Calu3 (cell line): ENCODE measurements at regions of chr3 and their contacts with region 1.

Region 1: DNA sequence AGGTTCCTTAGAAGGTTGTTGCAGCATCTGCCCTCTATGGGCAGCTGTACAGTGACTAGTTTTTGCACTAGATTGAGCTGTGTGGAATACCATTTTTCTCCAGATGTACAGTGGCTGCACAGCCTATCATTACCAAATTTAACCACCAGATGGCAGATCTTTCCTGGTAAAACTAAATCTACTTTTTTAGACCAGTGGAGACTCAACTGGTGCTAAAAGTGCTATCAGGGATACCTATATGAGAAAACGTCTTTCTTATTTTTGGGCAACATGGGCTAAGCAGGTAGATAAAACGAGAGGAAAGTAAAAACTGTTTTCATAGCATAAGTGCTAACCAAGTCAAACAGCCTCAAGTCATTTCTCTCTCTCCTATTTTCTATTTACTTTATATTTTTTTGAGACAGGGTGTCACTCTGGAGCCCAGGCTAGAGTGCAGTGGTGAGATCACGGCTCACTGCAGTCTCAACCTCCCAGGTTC is 21.2 kb downstream of the IGSF10 start:
- DNase-seq: peak; percentile 66
- H3K4me3 Mint-ChIP-seq: no peak overlapping the region
- H3K27ac Mint-ChIP-seq: no peak overlapping the region
- H3K4me1 Mint-ChIP-seq: peaks cover 8% of the 10 kb centered on the region
- H3K27me3 Mint-ChIP-seq: no peaks in the 10 kb centered on the region
- CTCF ChIP-seq: peak; percentile 88

Region 2: DNA sequence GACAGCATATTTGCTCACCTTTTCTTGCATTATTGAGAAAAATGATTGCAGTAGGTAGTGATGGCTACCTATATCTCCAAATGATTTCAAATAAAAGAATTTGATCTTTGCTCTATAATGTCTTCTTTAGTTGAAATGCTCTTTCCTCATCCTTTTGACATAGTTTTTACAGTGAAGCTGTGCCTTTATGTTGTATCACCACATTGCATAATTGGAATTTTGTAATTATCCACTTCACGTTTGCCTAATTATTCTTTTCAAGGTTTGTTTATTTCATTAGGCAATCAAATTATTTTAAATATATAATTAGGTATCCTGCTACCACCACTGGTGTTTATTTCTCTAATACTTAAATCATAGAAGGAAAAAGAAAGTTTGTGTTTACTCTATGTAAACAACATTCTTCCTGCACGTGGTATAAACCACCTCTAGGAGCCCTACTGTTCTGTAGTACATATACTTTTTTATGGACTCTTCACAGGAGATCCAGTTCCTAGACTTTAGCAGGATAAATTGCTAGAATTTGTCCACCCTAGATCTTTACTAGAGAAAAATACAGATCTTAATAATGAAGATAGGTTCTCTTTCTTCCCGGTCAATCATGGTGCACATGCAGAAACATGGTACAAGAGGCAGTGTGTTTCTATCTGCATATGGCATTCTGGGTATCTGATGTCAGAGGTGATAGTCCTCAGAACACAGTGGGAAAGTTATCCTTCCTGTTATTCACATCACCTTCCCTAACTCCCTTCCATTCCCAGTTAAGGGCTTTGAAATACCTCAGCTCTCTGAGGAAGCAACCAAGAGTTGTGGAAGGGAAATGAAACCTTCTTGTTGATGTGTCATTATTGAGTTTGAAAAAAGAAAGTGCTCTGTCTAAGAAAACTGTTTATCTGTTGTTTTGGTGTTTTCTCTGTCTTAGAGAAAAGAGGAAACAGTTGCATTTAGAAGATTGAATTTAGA is 88.8 kb before region 1 on chr3:
- CTCF ChIA-PET with region 1: no interaction called
- intact Hi-C with region 1: no loop called
- DNase-seq: no peak
- H3K4me3 Mint-ChIP-seq: no peak overlapping the region
- H3K27ac Mint-ChIP-seq: no peak overlapping the region
- H3K4me1 Mint-ChIP-seq: peaks cover 4% of the 10 kb centered on the region
- H3K27me3 Mint-ChIP-seq: no peaks in the 10 kb centered on the region
- CTCF ChIP-seq: no peak

Region 3: DNA sequence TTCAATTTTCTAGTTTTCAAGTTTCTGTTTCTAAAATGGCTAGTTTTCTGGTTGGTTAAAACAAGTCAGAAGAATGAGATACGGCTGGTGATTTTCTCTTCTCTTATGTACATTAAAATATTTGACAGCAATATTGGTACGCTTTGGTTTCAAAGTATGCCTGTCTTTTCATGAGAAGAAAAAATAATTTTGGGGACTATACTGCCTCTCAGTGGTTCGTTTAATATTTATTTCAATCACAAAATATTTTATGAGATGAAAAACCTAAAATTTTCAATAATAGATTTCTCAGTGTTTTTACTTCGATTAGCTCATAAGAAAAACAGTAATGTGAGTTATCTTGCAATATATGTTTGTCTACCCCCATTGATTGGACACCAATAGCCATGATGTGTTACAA is 221.2 kb after region 1 on chr3:
- CTCF ChIA-PET with region 1: no interaction called
- intact Hi-C with region 1: loop called (anchors 1 kb)
- DNase-seq: no peak
- H3K4me3 Mint-ChIP-seq: no peak overlapping the region
- H3K27ac Mint-ChIP-seq: no peak overlapping the region
- H3K4me1 Mint-ChIP-seq: no peaks in the 10 kb centered on the region
- H3K27me3 Mint-ChIP-seq: no peaks in the 10 kb centered on the region
- CTCF ChIP-seq: no peak